ENCODE measurements at regions of chr20 and their contacts with region 1.

Region 1: DNA sequence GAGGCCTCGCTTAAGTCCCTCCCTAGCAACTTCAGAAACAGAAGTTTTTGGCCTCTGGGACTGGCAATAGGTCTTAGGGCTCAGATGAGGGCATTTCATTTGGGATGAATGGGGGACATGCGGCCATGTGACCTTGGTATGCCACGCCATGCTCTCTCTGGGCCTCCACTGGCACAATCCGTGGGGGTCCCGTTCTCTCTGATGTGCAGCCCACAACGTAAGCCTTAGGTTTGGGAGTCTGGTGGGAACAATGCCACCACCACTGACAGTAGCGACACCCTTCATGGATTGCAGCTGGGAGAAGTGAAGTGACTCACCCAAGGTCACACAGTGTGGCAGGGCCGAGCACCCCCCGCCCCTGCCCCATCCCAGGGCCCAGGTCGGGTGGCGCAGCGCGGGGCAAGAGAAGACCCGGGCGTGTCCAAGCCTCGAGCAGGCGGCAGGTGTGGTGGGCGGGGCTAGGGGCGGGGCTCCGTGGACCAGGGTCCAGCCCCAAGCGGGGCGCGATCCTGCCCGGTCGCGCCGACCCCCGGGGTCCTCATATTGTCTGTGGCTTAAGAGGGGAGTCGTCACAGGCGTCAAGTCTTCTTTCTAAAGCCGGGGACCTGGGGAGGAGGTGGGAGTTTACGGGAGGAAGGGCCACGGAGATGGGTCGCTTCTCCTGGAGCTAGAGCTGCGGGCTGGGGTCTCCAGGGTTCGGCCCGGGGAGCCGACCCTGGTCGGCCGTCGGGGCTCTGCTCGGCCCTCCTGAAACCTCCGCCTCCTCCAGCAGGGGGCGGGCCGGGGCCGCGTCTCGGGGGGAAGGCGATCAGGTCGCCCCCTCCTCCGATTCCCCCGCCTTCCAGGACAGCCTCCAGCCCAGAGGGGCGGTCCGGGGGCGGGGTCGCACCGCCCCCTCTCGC is 698 bp upstream of the CEBPB start:
- DNase-seq: peak; percentile 95
- ATAC-seq: peak; percentile 78

Region 2: GRCh38 chr20:49297605-49298530 is 892.1 kb before region 1 on chr20:
- intact Hi-C with region 1: no loop called
- DNase-seq: no peak
- ATAC-seq: no peak

Region 3: DNA sequence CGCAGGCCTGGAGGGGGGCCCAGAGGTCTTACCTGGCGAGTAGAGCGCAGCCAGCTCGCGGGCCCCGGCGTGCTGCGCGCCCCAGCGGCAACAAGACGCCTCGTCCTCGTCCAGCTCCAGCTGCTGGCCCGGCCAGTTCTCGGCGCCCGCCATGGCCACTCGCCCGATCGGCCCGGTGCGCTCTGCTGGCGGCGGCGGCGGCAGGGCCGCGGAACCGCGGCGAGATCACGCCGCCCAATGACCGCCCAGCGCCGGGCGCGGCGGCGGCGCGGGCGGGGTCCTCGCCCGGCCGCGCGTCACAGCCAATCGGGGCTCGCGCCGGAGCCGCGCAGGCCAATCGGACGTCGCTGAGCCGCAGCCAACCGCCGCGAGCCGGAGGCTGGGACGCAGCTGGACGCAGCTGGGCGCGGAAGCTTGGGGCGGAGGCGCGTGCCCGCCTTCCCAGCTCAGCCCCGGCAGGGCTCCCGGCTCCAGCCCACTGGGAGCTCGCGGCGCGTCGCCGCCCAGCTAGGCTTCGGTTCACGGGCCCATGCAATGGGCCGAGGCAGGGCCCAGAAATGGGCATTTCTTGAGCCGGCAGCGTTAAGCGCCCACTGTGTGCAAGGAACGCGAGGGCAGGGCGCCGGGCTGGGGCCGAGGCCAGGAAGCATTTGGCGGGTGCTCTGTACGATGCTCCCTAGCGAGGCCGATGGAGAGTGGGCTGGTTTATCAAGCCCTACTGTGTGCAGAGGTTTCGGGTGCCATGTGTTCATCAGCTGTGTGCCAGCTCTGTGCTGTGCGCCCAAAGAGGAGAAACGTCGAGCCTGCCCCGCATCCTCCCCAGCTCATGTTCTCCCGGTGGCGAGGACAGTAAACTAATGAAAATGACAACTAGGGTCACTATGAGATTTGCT is 36.2 kb before region 1 on chr20 and contains the start of gene PEDS1:
- intact Hi-C with region 1: no loop called
- DNase-seq: peak; percentile 96
- ATAC-seq: peak; percentile 97
- total RNA-seq, gene PEDS1: 31.2 TPM

Region 4: DNA sequence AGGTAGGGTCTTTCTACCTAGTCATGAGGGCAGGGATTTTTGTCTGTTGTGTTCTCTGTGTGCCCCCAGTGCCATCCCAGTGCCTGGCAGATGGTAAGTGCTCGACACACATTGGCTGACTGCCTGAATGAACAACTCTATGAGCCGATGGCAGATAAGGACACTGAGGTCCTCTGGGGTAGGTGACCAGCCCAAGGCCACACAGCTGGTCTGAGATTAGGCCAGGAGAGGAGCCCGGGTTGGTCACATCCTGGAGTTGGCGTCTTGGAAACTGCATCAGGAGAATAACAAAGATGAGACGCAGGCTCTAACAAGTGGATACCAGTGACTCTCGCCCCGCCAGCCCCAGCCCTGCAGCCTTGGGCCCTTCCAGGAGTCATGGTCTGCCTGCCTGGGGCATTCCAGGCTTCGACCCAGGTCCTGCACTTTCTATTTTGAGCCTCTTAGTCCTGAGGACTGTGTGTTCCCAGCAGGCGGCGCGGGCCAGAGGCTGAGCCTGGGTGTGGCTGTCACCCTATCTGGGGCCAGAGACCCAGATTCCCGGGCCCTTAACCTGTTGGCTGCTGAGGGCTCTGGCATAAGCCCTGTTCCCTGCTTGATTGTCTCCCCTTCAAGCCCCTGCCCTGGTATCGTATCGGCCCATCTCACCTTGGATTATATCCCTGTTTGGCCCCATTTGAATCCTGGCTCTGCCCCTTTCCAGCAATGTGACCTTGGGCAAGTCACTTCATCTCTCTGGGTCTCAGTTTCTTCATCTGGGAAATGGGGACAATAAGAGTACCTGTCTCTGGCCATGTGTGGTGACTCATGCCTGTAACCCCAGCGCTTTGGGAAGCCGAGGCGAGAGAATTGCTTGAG is 89.0 kb after region 1 on chr20:
- intact Hi-C with region 1: loop called (anchors 2 kb)
- DNase-seq: peak; percentile 87
- ATAC-seq: peak; percentile 86

Region 5: DNA sequence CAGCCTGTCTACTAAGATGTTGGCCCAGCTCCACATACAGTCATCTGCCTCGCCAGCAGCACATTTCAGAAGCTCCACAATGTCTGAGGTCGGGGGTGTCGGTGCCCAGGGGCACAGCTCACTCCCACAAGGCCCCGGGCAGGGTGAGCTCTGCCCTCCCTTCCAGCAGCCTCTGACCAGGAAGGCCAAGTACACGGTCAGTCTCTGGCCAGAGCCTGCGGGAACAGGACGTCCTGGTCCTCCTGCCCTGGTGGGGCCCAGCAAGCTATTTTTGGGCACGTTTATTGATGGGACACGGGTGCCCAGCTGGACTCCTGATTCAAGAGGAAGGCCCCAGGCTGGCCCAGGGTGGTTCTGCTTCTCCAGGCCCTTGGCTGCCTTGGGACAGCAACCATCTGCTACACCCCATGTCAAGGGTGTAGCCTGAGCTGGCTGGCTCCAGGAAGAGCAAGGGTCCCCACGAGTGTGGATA is 205.4 kb after region 1 on chr20:
- intact Hi-C with region 1: loop called (anchors 2 kb)
- DNase-seq: peak; percentile 91
- ATAC-seq: peak; percentile 84

Region 6: DNA sequence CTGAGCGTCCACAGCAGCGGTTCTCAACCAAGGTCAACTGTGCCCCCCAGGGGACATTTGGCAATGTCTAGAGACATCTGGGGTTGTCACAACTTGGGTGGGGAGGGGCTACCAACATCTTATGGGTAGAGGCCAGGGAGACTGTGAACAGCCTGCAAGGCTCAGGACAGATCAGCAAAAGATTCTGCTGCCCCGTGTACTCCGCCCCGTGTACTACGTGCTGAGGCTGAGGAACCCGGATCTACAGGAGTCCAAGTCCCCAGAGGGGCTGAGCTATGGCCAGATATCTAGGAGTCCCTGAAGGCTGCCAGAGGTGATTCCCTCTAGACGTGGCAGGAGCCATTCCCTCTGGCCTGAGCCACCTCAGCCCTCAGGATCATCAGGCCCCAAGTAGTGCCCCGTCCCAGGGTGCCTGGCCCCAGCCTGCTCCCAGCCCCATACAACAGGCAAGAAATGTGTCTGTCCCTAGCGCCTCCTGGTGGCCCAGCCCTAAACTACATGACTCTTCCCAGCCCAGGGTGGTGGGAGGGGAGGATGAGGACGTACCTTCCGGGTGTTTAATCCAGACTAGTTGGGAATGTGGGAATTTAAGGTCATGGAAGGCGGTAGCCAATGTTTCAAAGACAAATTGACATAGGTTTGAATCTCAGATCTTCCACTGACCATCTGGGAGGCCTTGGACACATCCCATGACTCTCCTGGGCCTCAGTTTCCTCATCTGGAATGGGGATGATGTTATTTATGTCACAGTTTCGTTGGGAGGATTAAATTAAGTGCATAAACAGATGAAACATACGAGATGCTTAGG is 270.7 kb after region 1 on chr20:
- intact Hi-C with region 1: loop called (anchors 1 kb)
- DNase-seq: peak; percentile 94
- ATAC-seq: peak; percentile 93

Region 7: DNA sequence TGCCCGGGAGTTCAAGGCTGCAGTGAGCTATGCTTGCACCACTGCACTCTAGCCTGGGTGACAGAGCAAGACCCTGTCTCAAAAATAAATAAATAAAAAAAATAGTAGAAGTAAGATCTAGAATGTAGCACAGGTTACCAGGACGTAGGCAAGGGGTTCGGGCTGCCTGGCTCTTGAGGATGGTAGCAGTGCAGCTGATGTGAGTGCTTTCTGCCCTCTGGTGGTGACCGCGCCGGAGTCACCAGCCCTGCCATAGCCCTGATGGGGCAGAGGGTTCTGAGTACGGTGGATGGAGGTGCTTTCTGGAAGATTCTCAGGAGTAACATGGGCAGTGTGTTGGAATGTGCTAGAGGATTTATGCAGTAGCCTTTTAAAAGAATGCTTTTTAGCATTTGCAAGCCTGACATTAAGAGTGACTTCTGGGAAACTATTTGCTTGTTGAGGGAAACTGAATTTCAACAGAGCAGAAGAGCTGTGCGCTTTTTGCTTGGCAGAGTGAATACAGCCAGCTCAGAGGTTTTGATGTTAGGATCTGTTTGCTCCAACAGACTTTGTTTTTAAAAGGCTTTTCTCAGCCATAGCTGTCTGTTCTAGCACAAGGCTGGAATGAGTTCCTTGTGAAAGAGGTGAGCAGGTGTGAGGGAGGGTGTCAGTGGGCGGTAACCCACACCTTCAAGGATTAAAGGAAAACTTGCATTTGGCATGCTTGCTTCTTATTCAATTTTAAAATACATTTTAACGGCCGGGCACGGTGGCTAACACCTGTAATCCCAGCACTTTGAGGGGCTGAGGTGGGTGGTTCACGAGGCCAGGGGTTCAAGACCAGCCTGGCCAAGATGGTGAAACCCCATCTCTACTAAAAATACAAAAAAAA is 386.2 kb after region 1 on chr20:
- intact Hi-C with region 1: loop called (anchors 2 kb)
- DNase-seq: peak; percentile 88
- ATAC-seq: peak; percentile 66

Region 8: GRCh38 chr20:50713657-50714101 is 523.7 kb after region 1 on chr20:
- intact Hi-C with region 1: loop called (anchors 10 kb)
- DNase-seq: no peak
- ATAC-seq: peak; percentile 61

Region 9: GRCh38 chr20:50744143-50744792 is 554.3 kb after region 1 on chr20:
- intact Hi-C with region 1: loop called (anchors 10 kb)
- DNase-seq: peak; percentile 73
- ATAC-seq: peak; percentile 91

Measured in Right ventricle myocardium inferior (tissue), 1 donor.